ENCODE measurements at regions of chr11 and their contacts with region 1.

Region 1: GRCh38 chr11:70191495-70192140 is 11.5 kb upstream of the FADD start:
- DNase-seq: peak; percentile 76
- H3K4me3 ChIP-seq: no peak overlapping the region
- H3K27ac ChIP-seq: no peak overlapping the region
- H3K4me1 ChIP-seq: no peaks in the 10 kb centered on the region
- H3K27me3 ChIP-seq: no peaks in the 10 kb centered on the region
- CTCF ChIP-seq: peak; percentile 99

Region 2: GRCh38 chr11:69683764-69684333 is 507.8 kb before region 1 on chr11:
- CTCF ChIA-PET with region 1: no interaction called
- POLR2A ChIA-PET with region 1: no interaction called
- intact Hi-C with region 1: loop called (anchors 5 kb)
- DNase-seq: peak; percentile 81
- H3K4me3 ChIP-seq: no peak overlapping the region
- H3K27ac ChIP-seq: no peak overlapping the region
- H3K4me1 ChIP-seq: no peaks in the 10 kb centered on the region
- H3K27me3 ChIP-seq: no peaks in the 10 kb centered on the region
- CTCF ChIP-seq: peak; percentile 83

Region 3: GRCh38 chr11:69704508-69705253 is 486.9 kb before region 1 on chr11:
- CTCF ChIA-PET with region 1: no interaction called
- POLR2A ChIA-PET with region 1: no interaction called
- intact Hi-C with region 1: loop called (anchors 5 kb)
- DNase-seq: peak; percentile 94
- H3K4me3 ChIP-seq: peak overlapping the region; percentile 45
- H3K27ac ChIP-seq: no peak overlapping the region
- H3K4me1 ChIP-seq: peaks cover 44% of the 10 kb centered on the region
- H3K27me3 ChIP-seq: peaks cover 35% of the 10 kb centered on the region
- CTCF ChIP-seq: peak; percentile 75

Region 4: GRCh38 chr11:69918938-69919650 is 272.5 kb before region 1 on chr11:
- CTCF ChIA-PET with region 1: interaction called, 11 read pairs
- POLR2A ChIA-PET with region 1: no interaction called
- intact Hi-C with region 1: loop called (anchors 1 kb)
- DNase-seq: peak; percentile 93
- H3K4me3 ChIP-seq: no peak overlapping the region
- H3K27ac ChIP-seq: no peak overlapping the region
- H3K4me1 ChIP-seq: peaks cover 6% of the 10 kb centered on the region
- H3K27me3 ChIP-seq: peaks cover 3% of the 10 kb centered on the region
- CTCF ChIP-seq: peak; percentile 99

Region 5: GRCh38 chr11:69950120-69950519 is 241.5 kb before region 1 on chr11:
- CTCF ChIA-PET with region 1: no interaction called
- POLR2A ChIA-PET with region 1: no interaction called
- intact Hi-C with region 1: loop called (anchors 1 kb)
- DNase-seq: peak; percentile 60
- H3K4me3 ChIP-seq: no peak overlapping the region
- H3K27ac ChIP-seq: no peak overlapping the region
- H3K4me1 ChIP-seq: no peaks in the 10 kb centered on the region
- H3K27me3 ChIP-seq: no peaks in the 10 kb centered on the region
- CTCF ChIP-seq: peak; percentile 76

Region 6: DNA sequence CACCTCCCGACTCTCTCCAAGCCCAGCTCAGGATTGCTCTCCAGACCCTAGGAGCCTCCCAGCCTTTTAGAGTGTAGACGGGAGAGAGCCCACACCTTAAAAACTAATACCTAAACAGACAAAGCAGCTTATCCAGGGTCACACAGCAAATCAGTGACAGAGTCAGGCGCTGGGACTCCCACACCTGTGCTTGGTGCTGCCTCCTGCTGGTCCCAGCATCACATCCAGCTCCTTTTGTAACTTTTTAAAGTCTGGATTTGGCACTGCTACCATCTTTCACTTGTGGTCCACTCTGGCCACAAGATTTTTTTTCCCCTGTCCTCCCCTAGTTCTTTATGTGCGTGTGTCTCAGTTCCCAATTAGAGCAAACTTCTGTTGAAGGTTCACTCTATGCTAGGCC is 108.8 kb before region 1 on chr11:
- CTCF ChIA-PET with region 1: no interaction called
- POLR2A ChIA-PET with region 1: no interaction called
- intact Hi-C with region 1: loop called (anchors 10 kb)
- DNase-seq: no peak
- H3K4me3 ChIP-seq: no peak overlapping the region
- H3K27ac ChIP-seq: no peak overlapping the region
- H3K4me1 ChIP-seq: no peaks in the 10 kb centered on the region
- H3K27me3 ChIP-seq: peaks cover 42% of the 10 kb centered on the region
- CTCF ChIP-seq: peak; percentile 48

Measured in A673 (cell line).